ENCODE measurements at regions of chr6 and their contacts with region 1.

Region 1: GRCh38 chr6:42901536-42901957 is 14.3 kb upstream of the PTCRA start:
- DNase-seq: peak; percentile 34 to 82 (median 76)
- ATAC-seq: peak; percentile 100
- H3K4me3 ChIP-seq: no peak overlapping the region
- H3K4me3 Mint-ChIP-seq: peak overlapping the region in 1 of 10 donors; percentile 65
- H3K27ac ChIP-seq: no peak overlapping the region
- H3K27ac Mint-ChIP-seq: peak overlapping the region in 1 of 9 donors; percentile 18
- H3K4me1 ChIP-seq: no peaks in the 10 kb centered on the region
- H3K4me1 Mint-ChIP-seq: peaks cover 0 to 17% (median 5%) of the 10 kb centered on the region in 7 donors
- H3K27me3 ChIP-seq: no peaks in the 10 kb centered on the region
- H3K27me3 Mint-ChIP-seq: peaks cover 0 to 6% (median 0%) of the 10 kb centered on the region in 5 donors

Region 2: DNA sequence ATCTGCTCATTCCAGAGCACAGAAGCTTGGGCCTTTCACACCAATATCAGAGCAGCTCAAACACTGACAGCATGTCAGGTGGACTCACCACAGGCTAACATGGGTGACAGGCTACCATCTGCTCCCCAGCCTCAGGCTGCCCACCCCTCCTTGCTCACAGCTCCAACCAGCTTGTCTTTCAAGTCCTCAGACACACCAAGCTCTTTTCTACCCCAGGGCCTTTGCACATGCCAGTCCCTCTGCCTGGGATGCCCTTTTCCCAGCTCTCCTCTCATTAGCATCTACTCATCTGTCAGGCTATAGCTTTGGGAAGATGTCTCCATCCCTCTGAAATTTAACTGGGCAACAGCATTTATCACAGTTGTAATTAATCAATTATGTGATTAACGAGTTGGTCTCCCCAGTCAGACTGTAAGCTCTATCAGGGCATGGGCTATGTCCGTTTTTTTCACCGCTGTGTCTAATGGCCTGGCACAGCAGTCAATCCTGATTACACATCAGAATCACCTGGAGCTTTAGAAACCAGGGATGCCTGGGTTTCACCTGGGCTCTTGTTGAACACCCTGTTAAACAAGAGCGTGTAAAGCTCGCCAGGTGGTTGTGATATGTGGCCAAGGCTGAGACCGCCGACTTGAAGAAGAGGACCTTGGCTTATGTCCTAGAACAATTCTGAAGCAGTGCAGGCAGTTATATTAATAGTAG is 595.0 kb before region 1 on chr6:
- CTCF ChIA-PET with region 1: no interaction called
- POLR2A ChIA-PET with region 1: no interaction called
- intact Hi-C with region 1: loop called in 1 of 2 experiments (anchors 5 kb)
- DNase-seq: no peak
- ATAC-seq: no peak
- H3K4me3 ChIP-seq: no peak overlapping the region
- H3K4me3 Mint-ChIP-seq: no peak overlapping the region
- H3K27ac ChIP-seq: no peak overlapping the region
- H3K27ac Mint-ChIP-seq: peak overlapping the region in 2 of 9 donors; percentile 46 to 83
- H3K4me1 ChIP-seq: no peaks in the 10 kb centered on the region
- H3K4me1 Mint-ChIP-seq: peaks cover 13 to 39% (median 18%) of the 10 kb centered on the region in 7 donors
- H3K27me3 ChIP-seq: no peaks in the 10 kb centered on the region
- H3K27me3 Mint-ChIP-seq: no peaks in the 10 kb centered on the region

Region 3: DNA sequence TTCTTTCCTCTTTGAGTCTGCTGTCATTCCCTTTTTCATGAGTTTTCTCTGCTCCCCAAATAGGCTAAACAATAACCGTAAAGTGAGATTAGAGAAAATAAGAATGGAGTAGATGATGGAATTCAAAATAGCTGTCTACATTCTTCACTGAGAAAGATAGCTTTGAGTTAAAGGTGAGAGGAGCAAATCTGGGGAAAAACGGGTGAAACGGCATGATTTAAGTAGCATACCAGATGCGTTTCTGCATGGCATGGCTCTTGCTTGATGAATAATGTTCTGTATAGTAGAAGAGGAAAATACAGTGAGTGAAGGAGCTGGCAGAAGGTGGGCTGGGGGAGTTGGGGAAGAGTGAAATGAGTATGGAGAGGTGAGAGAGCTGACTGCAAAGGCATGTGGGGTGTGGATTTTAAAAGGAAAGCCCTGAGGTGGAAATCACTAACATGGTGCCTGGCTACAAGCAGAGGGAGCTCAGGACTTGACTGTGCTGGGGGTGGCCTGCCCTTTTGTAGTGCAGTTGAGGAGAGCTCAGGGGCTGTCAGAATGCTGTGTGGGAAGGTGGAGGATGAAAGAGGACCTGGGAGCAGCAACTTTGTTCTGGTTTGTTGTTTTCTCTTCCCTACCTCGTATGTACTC is 110.9 kb before region 1 on chr6:
- CTCF ChIA-PET with region 1: no interaction called
- POLR2A ChIA-PET with region 1: no interaction called
- intact Hi-C with region 1: no loop called
- DNase-seq: no peak
- ATAC-seq: no peak
- H3K4me3 ChIP-seq: no peak overlapping the region
- H3K4me3 Mint-ChIP-seq: peak overlapping the region in 7 of 10 donors; percentile 5 to 54 (median 22)
- H3K27ac ChIP-seq: peak overlapping the region; percentile 66
- H3K27ac Mint-ChIP-seq: peak overlapping the region in 6 of 9 donors; percentile 48 to 94 (median 90)
- H3K4me1 ChIP-seq: peaks cover 34 to 35% of the 10 kb centered on the region in 2 donors
- H3K4me1 Mint-ChIP-seq: peaks cover 6 to 29% (median 25%) of the 10 kb centered on the region in 7 donors
- H3K27me3 ChIP-seq: no peaks in the 10 kb centered on the region
- H3K27me3 Mint-ChIP-seq: no peaks in the 10 kb centered on the region

Region 4: GRCh38 chr6:42808492-42809483 is 92.8 kb before region 1 on chr6:
- CTCF ChIA-PET with region 1: no interaction called
- POLR2A ChIA-PET with region 1: no interaction called
- intact Hi-C with region 1: no loop called
- DNase-seq: no peak
- ATAC-seq: no peak
- H3K4me3 ChIP-seq: no peak overlapping the region
- H3K4me3 Mint-ChIP-seq: no peak overlapping the region
- H3K27ac ChIP-seq: no peak overlapping the region
- H3K27ac Mint-ChIP-seq: peak overlapping the region in 3 of 9 donors; percentile 8 to 47 (median 42)
- H3K4me1 ChIP-seq: no peaks in the 10 kb centered on the region
- H3K4me1 Mint-ChIP-seq: peaks cover 4 to 26% (median 15%) of the 10 kb centered on the region in 7 donors
- H3K27me3 ChIP-seq: no peaks in the 10 kb centered on the region
- H3K27me3 Mint-ChIP-seq: no peaks in the 10 kb centered on the region

Region 5: DNA sequence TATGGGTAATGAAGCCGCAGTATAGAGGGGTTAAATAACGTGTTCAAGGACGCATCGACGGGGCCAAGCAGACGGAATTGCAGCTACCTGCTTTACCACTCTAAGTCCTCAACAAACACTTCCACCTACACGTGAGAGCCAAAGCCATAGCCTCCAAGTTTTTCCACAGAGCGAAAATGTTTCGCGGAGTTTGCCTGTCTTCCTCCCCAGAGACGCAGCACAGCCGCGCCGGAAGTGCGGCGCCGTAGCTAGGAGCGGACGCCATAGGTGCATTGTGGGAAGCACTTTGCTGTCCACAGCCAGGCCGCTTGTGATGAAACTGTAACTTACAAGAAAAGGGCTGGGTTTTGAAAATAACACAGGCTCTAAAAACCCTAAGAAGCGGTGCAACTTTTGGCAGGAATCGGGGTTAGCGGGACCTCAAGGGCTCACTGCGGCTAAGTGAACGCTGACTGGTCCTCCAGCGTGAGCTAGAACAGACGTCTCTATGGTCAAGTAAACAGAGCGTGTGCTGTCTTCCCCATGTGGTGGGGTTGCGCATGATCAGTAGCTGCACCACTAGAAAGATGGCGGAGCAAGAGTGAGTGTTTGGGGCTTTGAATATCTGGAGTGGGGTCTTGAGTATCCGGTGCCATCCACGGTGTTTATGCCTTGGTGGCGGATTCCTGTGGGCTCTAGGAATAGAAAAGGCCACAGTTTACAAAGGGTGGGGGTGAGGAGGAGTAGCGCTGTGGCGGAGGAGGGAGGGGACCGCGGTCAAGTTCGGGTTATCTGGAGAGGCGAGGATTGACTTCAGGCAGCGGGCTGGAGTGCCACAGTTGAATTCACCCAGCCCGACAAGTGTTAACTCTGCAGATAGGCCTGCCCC is 21.9 kb before region 1 on chr6 and contains the start of gene RPL7L1:
- CTCF ChIA-PET with region 1: interaction called, 4 read pairs
- POLR2A ChIA-PET with region 1: interaction called, 7 read pairs
- intact Hi-C with region 1: loop called in 1 of 2 experiments (anchors 1 kb)
- DNase-seq: peak; percentile 70 to 93 (median 88)
- ATAC-seq: peak; percentile 95
- H3K4me3 ChIP-seq: peak within 1 kb of the TSS; percentile 82
- H3K4me3 Mint-ChIP-seq: peak within 1 kb of the TSS; percentile 93 to 99 (median 96)
- H3K27ac ChIP-seq: peak within 1 kb of the TSS; percentile 89
- H3K27ac Mint-ChIP-seq: peak within 1 kb of the TSS; percentile 98 to 100 (median 99)
- H3K4me1 ChIP-seq: peaks cover 5 to 7% of the 10 kb centered on the region in 2 donors
- H3K4me1 Mint-ChIP-seq: peaks cover 7 to 40% (median 29%) of the 10 kb centered on the region in 7 donors
- H3K27me3 ChIP-seq: no peaks in the 10 kb centered on the region
- H3K27me3 Mint-ChIP-seq: no peaks in the 10 kb centered on the region
- total RNA-seq, gene RPL7L1: 65.6 to 91.7 (median 78.1) TPM

Region 6: DNA sequence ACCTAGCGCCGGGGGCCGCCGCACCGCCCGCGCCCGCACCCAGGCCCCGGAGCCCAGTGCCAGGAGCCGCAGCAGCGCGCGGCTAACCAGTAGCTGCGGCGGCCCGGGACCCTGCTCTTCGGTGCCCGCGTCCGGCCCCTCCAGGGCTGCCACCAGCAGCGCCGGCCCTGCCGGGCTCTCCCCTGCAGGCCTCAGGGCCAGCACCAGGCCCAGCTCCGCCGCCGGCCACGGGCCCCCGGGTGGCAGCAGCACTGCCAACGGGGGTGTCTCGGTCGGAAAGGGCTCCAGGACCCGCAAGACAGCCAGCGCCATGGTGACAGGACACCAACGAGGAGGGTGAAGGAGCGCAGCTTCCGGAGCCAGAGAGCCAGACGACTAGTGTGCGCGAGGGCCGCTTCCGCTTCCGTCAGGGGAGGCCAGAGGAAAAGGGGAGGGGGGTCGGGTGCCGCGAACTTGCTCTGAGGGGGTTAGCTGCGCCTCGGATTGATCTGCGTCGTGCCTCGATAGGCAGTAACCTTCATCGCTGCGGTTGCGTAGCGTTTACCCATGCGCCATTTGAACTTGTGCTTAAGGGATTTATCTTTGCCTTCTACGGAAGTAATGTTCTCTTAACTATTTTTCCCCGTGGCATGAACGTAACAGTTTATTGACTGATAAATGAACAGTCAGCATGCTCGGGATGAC is 77.4 kb after region 1 on chr6 and contains the start of gene PEX6:
- CTCF ChIA-PET with region 1: interaction called, 3 read pairs
- POLR2A ChIA-PET with region 1: no interaction called
- intact Hi-C with region 1: loop called in 1 of 2 experiments (anchors 1 kb)
- DNase-seq: peak; percentile 77 to 98 (median 93)
- ATAC-seq: peak; percentile 97
- H3K4me3 ChIP-seq: peak within 1 kb of the TSS; percentile 90
- H3K4me3 Mint-ChIP-seq: peak within 1 kb of the TSS; percentile 91 to 99 (median 94)
- H3K27ac ChIP-seq: peak within 1 kb of the TSS; percentile 85
- H3K27ac Mint-ChIP-seq: peak within 1 kb of the TSS; percentile 92 to 99 (median 98)
- H3K4me1 ChIP-seq: peaks cover 30 to 32% of the 10 kb centered on the region in 2 donors
- H3K4me1 Mint-ChIP-seq: peaks cover 19 to 61% (median 47%) of the 10 kb centered on the region in 7 donors
- H3K27me3 ChIP-seq: no peaks in the 10 kb centered on the region
- H3K27me3 Mint-ChIP-seq: no peaks in the 10 kb centered on the region
- total RNA-seq, gene PEX6: 14.1 to 42.3 (median 28.0) TPM

Region 7: GRCh38 chr6:43021270-43022047 is 119.9 kb after region 1 on chr6 and contains the start of gene RRP36:
- CTCF ChIA-PET with region 1: no interaction called
- POLR2A ChIA-PET with region 1: no interaction called
- intact Hi-C with region 1: loop called (anchors 1 kb)
- DNase-seq: peak; percentile 33 to 76 (median 51)
- ATAC-seq: peak; percentile 88
- H3K4me3 ChIP-seq: peak within 1 kb of the TSS; percentile 89
- H3K4me3 Mint-ChIP-seq: peak within 1 kb of the TSS; percentile 95 to 99 (median 98)
- H3K27ac ChIP-seq: peak within 1 kb of the TSS; percentile 81
- H3K27ac Mint-ChIP-seq: peak within 1 kb of the TSS; percentile 74 to 97 (median 93)
- H3K4me1 ChIP-seq: peaks cover 11 to 19% of the 10 kb centered on the region in 2 donors
- H3K4me1 Mint-ChIP-seq: peaks cover 23 to 60% (median 41%) of the 10 kb centered on the region in 7 donors
- H3K27me3 ChIP-seq: no peaks in the 10 kb centered on the region
- H3K27me3 Mint-ChIP-seq: no peaks in the 10 kb centered on the region
- total RNA-seq, gene RRP36: 25.4 to 66.3 (median 48.4) TPM

Region 8: DNA sequence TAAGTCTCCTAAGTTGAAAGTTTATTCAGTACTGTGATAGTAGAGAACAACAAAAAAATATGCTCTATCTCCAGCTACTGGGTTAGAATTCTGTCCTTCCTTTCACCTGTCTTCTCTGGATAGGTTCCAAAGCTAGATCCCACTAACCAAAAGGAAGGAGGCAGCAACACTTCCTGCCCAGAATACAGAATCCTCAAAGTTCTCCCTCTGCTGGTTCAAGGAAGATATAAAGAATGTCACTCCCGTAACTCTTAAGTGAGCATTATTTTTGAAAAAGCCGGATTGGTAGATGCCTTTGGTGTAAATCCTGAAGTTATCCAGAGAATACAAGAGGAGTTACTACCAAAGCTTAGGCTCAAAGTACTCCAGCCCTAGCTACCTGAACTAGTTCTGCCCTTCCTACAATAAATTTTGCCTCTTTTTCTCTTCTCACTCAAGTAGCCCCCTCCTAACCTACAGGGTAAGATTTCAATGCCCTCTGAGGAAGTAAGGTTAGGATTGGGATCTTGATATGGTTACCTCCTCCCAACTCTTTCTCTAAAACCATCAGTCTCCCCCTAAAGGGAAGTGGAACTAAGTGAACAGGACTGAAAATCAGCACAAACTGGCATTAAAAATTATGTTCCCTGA is 433.0 kb after region 1 on chr6:
- CTCF ChIA-PET with region 1: no interaction called
- POLR2A ChIA-PET with region 1: no interaction called
- intact Hi-C with region 1: loop called in 1 of 2 experiments (anchors 2 kb)
- DNase-seq: peak in 1 of 9 donors; percentile 24
- ATAC-seq: no peak
- H3K4me3 ChIP-seq: no peak overlapping the region
- H3K4me3 Mint-ChIP-seq: no peak overlapping the region
- H3K27ac ChIP-seq: no peak overlapping the region
- H3K27ac Mint-ChIP-seq: peak overlapping the region in 5 of 9 donors; percentile 8 to 65 (median 32)
- H3K4me1 ChIP-seq: peaks cover 0 to 15% of the 10 kb centered on the region in 2 donors
- H3K4me1 Mint-ChIP-seq: peaks cover 10 to 38% (median 22%) of the 10 kb centered on the region in 7 donors
- H3K27me3 ChIP-seq: no peaks in the 10 kb centered on the region
- H3K27me3 Mint-ChIP-seq: peaks cover 0 to 3% (median 0%) of the 10 kb centered on the region in 5 donors

Region 9: DNA sequence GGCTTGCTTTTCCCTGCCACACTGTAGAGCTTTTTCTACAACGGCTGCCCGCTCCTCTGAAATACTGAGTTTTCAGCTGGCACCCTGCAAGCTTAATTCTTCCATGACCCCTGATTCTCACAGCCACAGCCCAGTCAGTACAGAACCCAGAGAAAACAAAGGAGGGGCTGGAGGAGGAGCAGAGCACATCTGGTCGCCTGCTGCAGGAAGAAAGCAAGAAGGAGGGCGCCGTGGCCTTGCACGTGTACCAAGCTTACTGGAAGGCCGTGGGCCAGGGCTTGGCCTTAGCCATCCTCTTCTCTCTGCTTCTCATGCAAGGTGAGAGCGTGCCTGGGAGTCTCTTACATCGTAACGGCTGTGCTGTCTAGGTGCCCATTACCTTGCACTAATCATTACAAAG is 542.5 kb after region 1 on chr6:
- CTCF ChIA-PET with region 1: no interaction called
- POLR2A ChIA-PET with region 1: no interaction called
- intact Hi-C with region 1: no loop called
- DNase-seq: no peak
- ATAC-seq: no peak
- H3K4me3 ChIP-seq: no peak overlapping the region
- H3K4me3 Mint-ChIP-seq: no peak overlapping the region
- H3K27ac ChIP-seq: no peak overlapping the region
- H3K27ac Mint-ChIP-seq: no peak overlapping the region
- H3K4me1 ChIP-seq: no peaks in the 10 kb centered on the region
- H3K4me1 Mint-ChIP-seq: no peaks in the 10 kb centered on the region
- H3K27me3 ChIP-seq: no peaks in the 10 kb centered on the region
- H3K27me3 Mint-ChIP-seq: no peaks in the 10 kb centered on the region

Region 10: DNA sequence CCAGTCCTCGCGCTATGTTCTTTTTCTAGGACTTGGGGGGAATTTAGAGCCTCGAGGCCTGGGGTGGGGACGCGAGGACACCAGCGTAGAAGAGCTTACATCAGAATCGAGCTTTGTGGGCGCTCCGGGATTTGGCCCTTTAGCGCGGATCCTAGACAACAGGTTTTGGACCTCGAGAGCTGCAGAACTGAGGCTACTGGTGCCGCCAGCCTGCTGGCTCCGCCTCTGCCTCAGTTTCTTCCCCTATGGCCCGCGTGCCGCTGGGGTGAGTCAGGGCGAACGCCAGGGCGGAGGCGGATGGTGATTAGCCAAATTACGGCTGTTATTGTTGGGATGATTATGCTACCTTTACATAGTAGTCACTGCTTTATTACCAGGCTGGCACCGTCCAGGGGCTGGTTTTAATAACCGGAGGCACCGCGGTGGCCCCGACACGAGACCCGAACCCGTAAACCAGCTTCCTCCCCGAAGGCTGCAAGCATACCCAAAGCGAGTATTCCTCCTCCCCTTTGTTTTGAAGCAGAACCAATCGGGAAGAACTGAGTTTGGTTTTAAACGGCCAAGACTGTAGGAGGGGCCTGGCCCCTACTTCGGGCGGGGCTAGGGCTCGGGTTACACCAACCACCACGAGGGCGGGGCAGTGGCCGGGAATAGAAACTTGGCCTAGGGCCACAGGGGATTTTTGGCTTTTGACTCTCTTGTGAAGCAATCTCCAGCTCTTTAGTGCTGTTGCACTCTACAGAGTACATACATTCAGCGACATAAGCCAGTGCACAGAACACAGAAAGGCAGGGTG is 728.2 kb after region 1 on chr6:
- CTCF ChIA-PET with region 1: no interaction called
- POLR2A ChIA-PET with region 1: no interaction called
- intact Hi-C with region 1: no loop called
- DNase-seq: peak; percentile 64 to 90 (median 75)
- ATAC-seq: peak; percentile 79
- H3K4me3 ChIP-seq: peak overlapping the region; percentile 98
- H3K4me3 Mint-ChIP-seq: peak overlapping the region; percentile 97 to 100 (median 99)
- H3K27ac ChIP-seq: peak overlapping the region; percentile 76
- H3K27ac Mint-ChIP-seq: peak overlapping the region; percentile 90 to 99 (median 98)
- H3K4me1 ChIP-seq: peaks cover 9 to 11% of the 10 kb centered on the region in 2 donors
- H3K4me1 Mint-ChIP-seq: peaks cover 30 to 42% (median 38%) of the 10 kb centered on the region in 7 donors
- H3K27me3 ChIP-seq: no peaks in the 10 kb centered on the region
- H3K27me3 Mint-ChIP-seq: no peaks in the 10 kb centered on the region

Measured in naive thymus-derived CD4-positive, alpha-beta T cell (primary cell).